OCI-LY7 (cell line): ENCODE measurements at regions of chr22 and their contacts with region 1.

Region 1: GRCh38 chr22:50691521-50691920 is 18.9 kb downstream of the SHANK3 start:
- DNase-seq: peak; percentile 57
- H3K4me3 ChIP-seq: no peak overlapping the region
- H3K27ac ChIP-seq: no peak overlapping the region
- H3K4me1 ChIP-seq: peaks cover 7% of the 10 kb centered on the region
- CTCF ChIP-seq: peak; percentile 95

Region 2: GRCh38 chr22:50525390-50526068 is 166.0 kb before region 1 on chr22 and contains the start of gene SCO2:
- CTCF ChIA-PET with region 1: no interaction called
- POLR2A ChIA-PET with region 1: no interaction called
- intact Hi-C with region 1: no loop called
- DNase-seq: peak; percentile 99
- H3K4me3 ChIP-seq: peak within 1 kb of the TSS; percentile 77
- H3K27ac ChIP-seq: peak within 1 kb of the TSS; percentile 92
- H3K4me1 ChIP-seq: peaks cover 24% of the 10 kb centered on the region
- CTCF ChIP-seq: peak; percentile 56
- total RNA-seq, gene SCO2: 2.7 and 4.9 TPM in 2 replicates

Region 3: GRCh38 chr22:50627642-50628542 is 63.6 kb before region 1 on chr22 and contains the start of gene ARSA:
- CTCF ChIA-PET with region 1: no interaction called
- POLR2A ChIA-PET with region 1: no interaction called
- intact Hi-C with region 1: loop called (anchors 2 kb)
- DNase-seq: peak; percentile 90
- H3K4me3 ChIP-seq: peak within 1 kb of the TSS; percentile 93
- H3K27ac ChIP-seq: no peak within 1 kb of the TSS
- H3K4me1 ChIP-seq: peaks cover 10% of the 10 kb centered on the region
- CTCF ChIP-seq: peak; percentile 55
- total RNA-seq, gene ARSA: 20.1 and 31.6 TPM in 2 replicates

Region 4: DNA sequence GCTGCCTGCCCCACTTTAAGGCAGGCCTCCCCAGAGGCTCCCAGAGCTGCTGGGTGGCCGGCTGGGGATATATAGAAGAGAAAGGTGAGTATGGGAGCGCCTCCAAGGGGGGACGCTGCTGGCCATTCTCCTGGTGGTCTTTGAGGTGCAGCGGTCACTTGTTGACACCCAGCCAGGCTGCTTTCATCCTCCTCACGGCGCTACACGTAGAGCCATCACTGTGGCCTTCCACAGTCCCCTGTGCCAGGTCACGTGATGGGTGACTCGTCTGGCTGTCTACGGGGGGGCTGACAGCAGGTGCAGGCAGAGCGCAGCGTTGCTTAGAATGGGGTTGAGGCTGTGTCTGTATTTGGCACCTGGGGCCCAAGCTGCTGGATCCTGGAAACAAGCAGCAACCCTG is 48.4 kb after region 1 on chr22:
- CTCF ChIA-PET with region 1: no interaction called
- POLR2A ChIA-PET with region 1: no interaction called
- intact Hi-C with region 1: no loop called
- DNase-seq: no peak
- H3K4me3 ChIP-seq: no peak overlapping the region
- H3K27ac ChIP-seq: no peak overlapping the region
- H3K4me1 ChIP-seq: no peaks in the 10 kb centered on the region
- CTCF ChIP-seq: no peak